CD14-positive monocyte (primary cell): ENCODE measurements at regions of chr3 and their contacts with region 1.

Region 1: DNA sequence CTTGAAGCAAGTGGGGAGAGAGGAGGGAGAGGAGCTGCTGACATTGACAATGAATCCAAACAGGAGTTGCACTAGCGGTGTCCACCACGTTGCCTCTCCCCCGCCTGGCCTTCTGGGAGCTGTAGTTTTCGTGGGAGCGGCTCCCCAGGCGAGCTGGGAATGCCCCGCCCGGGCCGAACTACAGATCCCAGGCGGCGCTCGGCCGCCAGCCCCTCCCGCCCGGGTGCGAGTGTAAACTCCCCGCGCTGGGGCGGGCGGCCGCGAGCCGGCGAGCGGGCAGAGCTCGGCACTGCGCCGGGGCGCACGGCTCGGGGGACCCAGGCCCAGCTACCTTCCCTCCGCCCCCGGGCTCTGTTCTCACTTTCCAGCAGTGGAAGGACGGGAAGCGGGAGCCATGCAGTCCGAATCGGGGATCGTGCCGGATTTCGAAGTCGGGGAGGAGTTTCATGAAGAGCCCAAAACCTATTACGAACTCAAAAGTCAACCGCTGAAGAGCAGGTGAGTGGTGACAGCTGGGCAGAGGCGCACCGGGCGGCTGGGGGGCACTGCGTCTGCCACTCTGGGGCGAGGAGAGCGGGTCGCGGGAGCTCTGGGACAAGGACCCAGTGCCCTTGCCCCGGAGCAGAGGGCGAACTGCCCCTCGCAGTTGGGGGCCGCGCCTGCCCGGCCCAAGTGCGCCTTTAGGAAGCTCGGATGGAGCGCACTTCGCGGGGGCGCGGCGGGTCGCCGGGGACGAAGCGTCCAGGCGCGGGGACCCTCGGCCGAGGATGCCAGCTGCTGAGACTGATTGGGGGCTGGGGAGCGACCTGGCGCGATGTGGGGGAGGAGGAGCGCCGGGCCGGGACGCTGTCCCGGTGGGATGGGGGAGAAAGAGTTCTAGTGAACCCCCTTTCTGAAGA is at the start of gene MITF:
- DNase-seq: peak; percentile 79 to 84 (median 81)
- H3K4me3 ChIP-seq: peak within 1 kb of the TSS; percentile 93 to 95 (median 94)
- H3K4me3 Mint-ChIP-seq: peak within 1 kb of the TSS; percentile 92 to 96
- H3K27ac ChIP-seq: peak within 1 kb of the TSS in 1 of 2 donors; percentile 76
- H3K27ac Mint-ChIP-seq: peak within 1 kb of the TSS; percentile 52 to 89 (median 86)
- H3K4me1 ChIP-seq: peaks cover 29 to 38% of the 10 kb centered on the region in 2 donors
- H3K4me1 Mint-ChIP-seq: peaks cover 49% of the 10 kb centered on the region
- H3K27me3 ChIP-seq: no peaks in the 10 kb centered on the region
- H3K27me3 Mint-ChIP-seq: peaks cover 0 to 5% (median 0%) of the 10 kb centered on the region in 3 donors
- CTCF ChIP-seq: no peak
- polyA plus RNA-seq, gene MITF: 7.0 to 15.1 (median 12.1) TPM

Region 2: DNA sequence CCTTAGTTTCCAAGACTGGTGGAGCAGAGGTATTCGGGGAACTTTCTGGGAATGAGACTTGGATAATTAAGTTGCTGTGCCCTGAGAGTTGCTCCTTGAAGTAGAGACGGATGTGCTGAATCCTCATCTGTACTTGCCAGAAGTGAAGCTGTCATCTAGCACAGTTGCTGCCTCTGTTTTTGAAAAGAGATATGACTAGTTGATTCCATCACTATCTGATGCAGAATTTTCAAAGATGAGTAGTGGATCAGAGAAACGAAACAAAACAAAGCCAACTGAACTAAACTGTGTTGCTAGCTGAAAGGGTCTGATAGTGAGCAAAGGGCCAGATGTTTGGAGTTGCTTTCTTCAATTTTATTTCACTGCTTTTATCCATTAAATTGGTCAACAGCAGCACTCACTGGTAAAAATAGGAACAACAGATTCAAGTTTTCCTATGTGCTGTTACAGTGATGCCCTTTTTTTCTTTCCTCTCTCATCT is 52.5 kb after region 1 on chr3:
- intact Hi-C with region 1: loop called in 1 of 2 experiments (anchors 10 kb)
- DNase-seq: peak in 2 of 3 donors; percentile 14 to 30
- H3K4me3 ChIP-seq: no peak overlapping the region
- H3K4me3 Mint-ChIP-seq: no peak overlapping the region
- H3K27ac ChIP-seq: no peak overlapping the region
- H3K27ac Mint-ChIP-seq: peak overlapping the region in 3 of 7 donors; percentile 18 to 90 (median 71)
- H3K4me1 ChIP-seq: peaks cover 24 to 26% of the 10 kb centered on the region in 2 donors
- H3K4me1 Mint-ChIP-seq: peaks cover 30% of the 10 kb centered on the region
- H3K27me3 ChIP-seq: no peaks in the 10 kb centered on the region
- H3K27me3 Mint-ChIP-seq: peaks cover 0 to 1% (median 0%) of the 10 kb centered on the region in 3 donors
- CTCF ChIP-seq: peak; percentile 74